HepG2 (cell line): ENCODE measurements at regions of chr3 and their contacts with region 1.

Region 1: GRCh38 chr3:160003520-160004128 is 15.0 kb downstream of the IL12A start:
- DNase-seq: peak; percentile 51
- ATAC-seq: peak; percentile 98
- H3K4me3 ChIP-seq: no peak overlapping the region
- H3K27ac ChIP-seq: no peak overlapping the region
- H3K4me1 ChIP-seq: no peaks in the 10 kb centered on the region
- H3K27me3 ChIP-seq: 0 out of 5 replicates have a peak, but pooled peaks cover 0 to 3% of the 10 kb centered on the region in 2 experiments
- CTCF ChIP-seq: peak; percentile 77
- EP300 ChIP-seq: no peak
- POLR2A ChIP-seq: no peak
- RAD21 ChIP-seq: peak; percentile 74

Region 2: GRCh38 chr3:159828542-159828943 is 175.1 kb before region 1 on chr3:
- CTCF ChIA-PET with region 1: no interaction called
- POLR2A ChIA-PET with region 1: no interaction called
- in situ Hi-C with region 1: no loop called
- intact Hi-C with region 1: loop called (anchors 2 kb)
- DNase-seq: peak; percentile 3
- ATAC-seq: peak; percentile 59; the same call in 1 of the 3 replicates
- H3K4me3 ChIP-seq: no peak overlapping the region
- H3K27ac ChIP-seq: no peak overlapping the region
- H3K4me1 ChIP-seq: no peaks in the 10 kb centered on the region
- H3K27me3 ChIP-seq: no peaks in the 10 kb centered on the region
- CTCF ChIP-seq: peak; percentile 38
- EP300 ChIP-seq: no peak
- POLR2A ChIP-seq: no peak
- RAD21 ChIP-seq: no peak

Region 3: DNA sequence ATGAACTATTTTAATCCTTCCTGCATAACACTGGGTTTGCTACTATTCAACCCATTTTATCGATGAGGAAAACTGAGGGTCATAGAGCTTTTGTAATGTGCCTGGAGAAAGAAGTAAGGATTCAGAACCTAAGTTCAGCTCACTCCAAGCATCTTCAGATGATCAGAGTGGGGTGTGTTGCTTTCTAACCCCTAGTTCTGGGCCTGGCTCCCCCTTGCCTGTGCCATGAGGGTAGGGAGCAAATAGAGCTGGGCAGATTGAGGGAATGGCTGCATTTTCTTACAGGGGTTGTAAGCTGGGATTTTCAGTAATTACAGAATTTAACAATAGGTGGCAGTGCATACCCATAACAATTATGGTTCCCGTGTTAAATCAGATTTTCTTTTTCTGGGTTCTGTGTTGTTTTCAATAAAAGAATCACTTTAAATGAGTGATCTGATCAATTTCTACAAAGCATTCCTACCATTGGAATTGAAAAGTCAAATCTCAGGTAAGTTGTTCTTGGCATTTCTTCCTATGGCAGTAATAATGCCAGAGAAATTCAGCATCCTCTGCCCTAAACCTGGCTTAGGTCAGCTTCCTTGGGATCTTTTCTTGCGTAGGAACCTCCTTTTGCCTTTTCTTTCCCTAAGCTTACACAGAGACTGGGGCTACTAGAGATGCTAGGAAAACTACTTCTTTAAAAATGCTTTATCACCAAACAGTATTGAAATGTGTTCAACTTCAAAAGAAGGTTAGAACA is 118.8 kb before region 1 on chr3:
- CTCF ChIA-PET with region 1: interaction called, 28 read pairs
- POLR2A ChIA-PET with region 1: no interaction called
- in situ Hi-C with region 1: loop called (anchors 5 kb)
- intact Hi-C with region 1: loop called (anchors 1 kb)
- DNase-seq: peak; percentile 9
- ATAC-seq: peak; percentile 82
- H3K4me3 ChIP-seq: no peak overlapping the region
- H3K27ac ChIP-seq: no peak overlapping the region
- H3K4me1 ChIP-seq: no peaks in the 10 kb centered on the region
- H3K27me3 ChIP-seq: no peaks in the 10 kb centered on the region
- CTCF ChIP-seq: peak; percentile 62
- EP300 ChIP-seq: no peak
- POLR2A ChIP-seq: no peak
- RAD21 ChIP-seq: no peak

Region 4: DNA sequence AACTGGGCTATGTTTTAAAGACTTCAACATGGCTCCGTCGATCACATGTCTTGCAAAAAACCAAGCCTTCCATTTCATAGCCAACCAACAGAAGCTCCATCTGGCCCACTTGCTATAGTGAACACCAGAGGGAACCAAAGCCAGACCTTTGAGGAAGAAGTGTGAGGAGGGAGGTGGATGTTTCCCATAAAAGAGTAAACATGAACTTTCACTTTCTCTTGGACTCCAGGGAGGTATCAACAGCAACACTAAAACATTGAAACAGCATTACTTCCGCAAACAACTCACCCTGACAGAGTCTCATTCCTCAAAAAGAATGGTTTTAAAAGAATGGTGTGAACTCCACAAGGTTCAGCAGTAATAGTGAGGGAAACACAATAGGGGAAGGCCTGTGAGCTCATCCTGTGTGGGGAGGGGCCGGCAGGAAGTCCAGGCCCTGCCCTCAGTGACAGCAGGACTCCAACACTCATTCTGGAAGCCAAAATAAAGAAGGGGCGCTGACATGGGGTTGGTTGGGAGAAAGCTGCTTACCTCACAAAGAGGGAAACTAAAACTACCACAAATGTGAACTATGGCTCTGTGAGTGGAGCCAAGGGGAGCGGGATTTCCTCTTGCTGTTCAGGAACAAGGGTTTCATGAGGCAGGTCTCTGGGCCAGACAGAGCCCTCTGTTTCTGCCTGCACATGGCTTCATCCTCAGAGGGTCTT is 74.0 kb before region 1 on chr3:
- CTCF ChIA-PET with region 1: interaction called, 16 read pairs
- POLR2A ChIA-PET with region 1: no interaction called
- in situ Hi-C with region 1: loop called (anchors 5 kb)
- intact Hi-C with region 1: loop called (anchors 1 kb)
- DNase-seq: peak; percentile 80
- ATAC-seq: peak; percentile 97
- H3K4me3 ChIP-seq: peak overlapping the region; percentile 28 to 51 (median 48); a peak in 5 of 6 replicates
- H3K27ac ChIP-seq: peak overlapping the region; percentile 10
- H3K4me1 ChIP-seq: peaks cover 18% of the 10 kb centered on the region
- H3K27me3 ChIP-seq: no peaks in the 10 kb centered on the region
- CTCF ChIP-seq: peak; percentile 80
- EP300 ChIP-seq: no peak
- POLR2A ChIP-seq: no peak
- RAD21 ChIP-seq: peak; percentile 78; the same call in 1 of the 2 replicates

Region 5: DNA sequence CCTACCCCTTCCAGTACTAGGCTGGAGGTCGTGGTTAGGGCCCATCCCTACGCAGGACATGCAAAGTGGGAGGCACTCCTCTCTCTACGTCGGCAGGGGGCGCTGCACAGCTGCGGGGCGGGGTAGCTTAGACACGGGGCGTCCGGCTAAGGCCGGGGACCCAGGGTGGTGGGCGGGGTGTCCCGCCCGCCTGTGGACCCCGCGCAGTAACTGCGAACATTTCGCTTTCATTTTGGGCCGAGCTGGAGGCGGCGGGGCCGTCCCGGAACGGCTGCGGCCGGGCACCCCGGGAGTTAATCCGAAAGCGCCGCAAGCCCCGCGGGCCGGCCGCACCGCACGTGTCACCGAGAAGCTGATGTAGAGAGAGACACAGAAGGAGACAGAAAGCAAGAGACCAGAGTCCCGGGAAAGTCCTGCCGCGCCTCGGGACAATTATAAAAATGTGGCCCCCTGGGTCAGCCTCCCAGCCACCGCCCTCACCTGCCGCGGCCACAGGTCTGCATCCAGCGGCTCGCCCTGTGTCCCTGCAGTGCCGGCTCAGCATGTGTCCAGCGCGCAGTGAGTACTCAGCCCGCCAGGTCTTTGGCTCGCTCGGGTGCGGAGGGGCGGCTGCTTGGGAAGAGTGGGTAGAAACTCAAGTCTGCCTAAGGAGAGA is 14.9 kb before region 1 on chr3 and contains the start of gene IL12A:
- CTCF ChIA-PET with region 1: interaction called, 7 read pairs
- POLR2A ChIA-PET with region 1: no interaction called
- in situ Hi-C with region 1: no loop called
- intact Hi-C with region 1: loop called (anchors 1 kb)
- DNase-seq: peak; percentile 59
- ATAC-seq: peak; percentile 98
- H3K4me3 ChIP-seq: peak within 1 kb of the TSS; percentile 63 to 71 (median 68)
- H3K27ac ChIP-seq: no peak within 1 kb of the TSS
- H3K4me1 ChIP-seq: peaks cover 20% of the 10 kb centered on the region
- H3K27me3 ChIP-seq: no peaks in the 10 kb centered on the region
- CTCF ChIP-seq: peak; percentile 95
- EP300 ChIP-seq: no peak
- POLR2A ChIP-seq: 0 out of 4 replicates have a peak, but pooled peaks of 1 of the 2 experiments have one; percentile 24
- RAD21 ChIP-seq: peak; percentile 69
- total RNA-seq, gene IL12A: 0.74 and 1.1 TPM in 2 replicates

Region 6: GRCh38 chr3:160052385-160053047 is 48.9 kb after region 1 on chr3:
- CTCF ChIA-PET with region 1: no interaction called
- POLR2A ChIA-PET with region 1: no interaction called
- in situ Hi-C with region 1: no loop called
- intact Hi-C with region 1: no loop called
- DNase-seq: no peak
- ATAC-seq: peak; percentile 63
- H3K4me3 ChIP-seq: peak overlapping the region; percentile 11 to 34 (median 26); a peak in 4 of 6 replicates
- H3K27ac ChIP-seq: no peak overlapping the region
- H3K4me1 ChIP-seq: peaks cover 32% of the 10 kb centered on the region
- H3K27me3 ChIP-seq: no peaks in the 10 kb centered on the region
- CTCF ChIP-seq: no peak
- EP300 ChIP-seq: no peak
- POLR2A ChIP-seq: no peak
- RAD21 ChIP-seq: no peak